IMR-90 (cell line): ENCODE measurements at regions of chr16 and their contacts with region 1.

Region 1: GRCh38 chr16:80029761-80030481 is 429.4 kb upstream of the MAF start:
- DNase-seq: no peak
- ATAC-seq: no peak
- H3K4me3 ChIP-seq: no peak overlapping the region
- H3K27ac ChIP-seq: no peak overlapping the region
- H3K4me1 ChIP-seq: no peaks in the 10 kb centered on the region
- H3K27me3 ChIP-seq: no peaks in the 10 kb centered on the region
- CTCF ChIP-seq: no peak
- POLR2A ChIP-seq: no peak
- RAD21 ChIP-seq: no peak

Region 2: GRCh38 chr16:79419148-79419547 is 610.8 kb before region 1 on chr16:
- CTCF ChIA-PET with region 1: no interaction called
- POLR2A ChIA-PET with region 1: no interaction called
- dilution Hi-C with region 1: no loop called
- in situ Hi-C with region 1: no loop called
- intact Hi-C with region 1: no loop called
- DNase-seq: no peak
- ATAC-seq: no peak
- H3K4me3 ChIP-seq: no peak overlapping the region
- H3K27ac ChIP-seq: no peak overlapping the region
- H3K4me1 ChIP-seq: no peaks in the 10 kb centered on the region
- H3K27me3 ChIP-seq: no peaks in the 10 kb centered on the region
- CTCF ChIP-seq: no peak
- POLR2A ChIP-seq: no peak
- RAD21 ChIP-seq: no peak

Region 3: DNA sequence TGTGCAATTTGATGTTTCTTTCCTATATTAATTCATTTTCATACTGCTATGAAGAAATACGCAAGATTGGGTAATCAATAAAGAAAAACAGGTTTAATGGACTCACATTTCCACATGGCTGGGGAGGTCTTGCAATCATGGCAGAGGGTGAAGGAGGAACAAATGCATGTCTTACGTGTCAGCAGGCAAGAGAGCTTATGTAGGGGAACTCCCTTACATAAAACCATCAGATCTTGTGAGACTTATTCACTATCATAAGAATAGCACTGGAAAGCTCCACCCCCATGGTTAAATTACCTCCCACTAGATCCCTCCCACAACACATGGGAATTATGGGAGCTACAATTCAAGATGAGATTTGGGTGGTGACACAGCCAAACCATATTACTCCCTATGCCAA is 10.5 kb before region 1 on chr16:
- CTCF ChIA-PET with region 1: no interaction called
- POLR2A ChIA-PET with region 1: no interaction called
- dilution Hi-C with region 1: no loop called
- in situ Hi-C with region 1: no loop called
- intact Hi-C with region 1: no loop called
- DNase-seq: no peak
- ATAC-seq: no peak
- H3K4me3 ChIP-seq: no peak overlapping the region
- H3K27ac ChIP-seq: no peak overlapping the region
- H3K4me1 ChIP-seq: no peaks in the 10 kb centered on the region
- H3K27me3 ChIP-seq: no peaks in the 10 kb centered on the region
- CTCF ChIP-seq: no peak
- POLR2A ChIP-seq: no peak
- RAD21 ChIP-seq: no peak

Region 4: DNA sequence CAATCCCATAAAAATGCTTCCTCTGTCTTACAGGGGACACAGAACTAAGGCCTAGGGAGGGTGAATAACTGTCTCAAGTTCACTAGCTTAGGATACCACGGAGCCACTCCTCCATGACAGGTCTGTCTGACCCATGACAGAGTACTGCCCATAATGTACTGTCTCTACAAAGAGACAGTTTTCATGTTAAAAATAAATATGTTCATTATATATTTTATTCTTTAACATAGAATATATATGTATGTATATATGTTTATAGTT is 482.6 kb after region 1 on chr16:
- CTCF ChIA-PET with region 1: no interaction called
- POLR2A ChIA-PET with region 1: interaction called, 16 read pairs
- dilution Hi-C with region 1: no loop called
- in situ Hi-C with region 1: no loop called
- intact Hi-C with region 1: no loop called
- DNase-seq: no peak
- ATAC-seq: no peak
- H3K4me3 ChIP-seq: no peak overlapping the region
- H3K27ac ChIP-seq: no peak overlapping the region
- H3K4me1 ChIP-seq: no peaks in the 10 kb centered on the region
- H3K27me3 ChIP-seq: no peaks in the 10 kb centered on the region
- CTCF ChIP-seq: no peak
- POLR2A ChIP-seq: no peak
- RAD21 ChIP-seq: no peak